PC-9 (cell line): ENCODE measurements at regions of chr13 and their contacts with region 1.

Region 1: GRCh38 chr13:30191491-30192100 is 115.8 kb downstream of the KATNAL1 start:
- DNase-seq: no peak
- H3K4me3 ChIP-seq: no peak overlapping the region
- H3K27ac ChIP-seq: no peak overlapping the region
- H3K4me1 ChIP-seq: no peaks in the 10 kb centered on the region
- H3K27me3 ChIP-seq: no peaks in the 10 kb centered on the region
- CTCF ChIP-seq: no peak

Region 2: DNA sequence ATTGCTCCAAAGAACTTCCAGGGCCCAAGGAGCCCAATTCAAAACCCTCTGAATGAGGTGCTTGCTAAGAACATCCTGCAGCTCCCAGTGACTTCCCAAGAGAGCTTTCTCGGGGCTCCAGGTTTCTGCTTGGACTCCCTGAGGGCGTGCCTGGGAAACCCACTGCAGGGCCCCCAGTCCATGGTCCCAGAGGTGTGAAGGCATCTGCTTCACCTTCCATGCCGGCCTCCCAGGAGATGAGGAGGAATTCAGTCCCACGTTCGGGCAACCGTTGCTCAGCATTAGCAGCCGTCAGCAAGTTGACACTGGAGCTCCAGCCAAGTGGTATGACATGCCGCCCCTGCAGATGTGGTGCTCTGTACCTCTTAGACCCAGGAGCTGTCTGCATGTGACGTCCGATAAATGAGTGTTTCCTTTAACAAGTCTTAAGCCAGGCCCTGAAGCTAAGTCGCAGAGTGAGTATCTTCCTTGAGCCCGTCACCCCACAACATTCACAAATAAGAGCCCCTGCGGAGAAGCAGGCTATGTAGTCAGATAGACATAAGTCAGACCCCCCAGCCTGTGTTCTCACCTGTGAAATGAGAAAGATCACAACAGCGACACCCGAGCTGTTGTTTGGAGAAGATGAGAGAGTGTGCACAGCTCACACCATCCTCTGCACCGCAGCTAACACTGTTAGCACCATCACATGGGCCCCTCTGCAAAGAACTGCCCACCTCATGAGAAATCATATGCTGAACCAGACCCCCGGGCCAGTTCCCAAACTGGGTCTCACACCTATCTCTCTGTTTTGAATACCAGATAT is 34.6 kb before region 1 on chr13:
- CTCF ChIA-PET with region 1: interaction called, 15 read pairs
- POLR2A ChIA-PET with region 1: no interaction called
- intact Hi-C with region 1: no loop called
- DNase-seq: no peak
- H3K4me3 ChIP-seq: no peak overlapping the region
- H3K27ac ChIP-seq: no peak overlapping the region
- H3K4me1 ChIP-seq: no peaks in the 10 kb centered on the region
- H3K27me3 ChIP-seq: no peaks in the 10 kb centered on the region
- CTCF ChIP-seq: no peak

Region 3: DNA sequence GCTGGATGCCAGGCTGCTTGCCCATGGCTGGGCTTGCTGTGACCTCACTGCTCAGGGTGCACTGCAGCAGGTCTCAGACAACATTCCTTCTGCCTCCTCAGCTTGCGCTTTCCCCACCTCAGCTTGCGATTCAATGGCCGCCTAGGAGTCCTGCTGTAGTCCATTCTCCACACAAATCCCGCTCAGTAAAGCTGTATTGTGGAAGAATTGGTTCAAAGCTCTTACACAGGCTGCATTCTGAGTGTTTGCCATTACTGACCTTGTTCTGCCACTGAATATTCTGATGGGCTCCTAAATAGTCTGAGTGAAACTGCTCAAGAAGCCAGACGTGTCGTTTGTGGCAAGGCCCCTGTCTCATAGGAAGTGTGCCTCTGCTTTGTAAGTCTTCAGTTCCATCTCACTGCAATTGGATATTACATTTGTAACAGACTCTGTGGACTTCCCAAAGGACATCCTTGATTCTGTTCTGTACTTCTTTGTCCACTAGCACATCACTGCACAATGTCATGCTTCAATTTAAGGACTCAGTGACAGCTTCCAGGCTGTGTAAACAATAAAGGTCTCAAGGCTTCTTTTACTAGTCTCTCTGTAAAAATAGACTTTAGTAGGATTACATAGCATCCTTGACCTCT is 66.0 kb after region 1 on chr13:
- CTCF ChIA-PET with region 1: no interaction called
- POLR2A ChIA-PET with region 1: no interaction called
- intact Hi-C with region 1: no loop called
- DNase-seq: no peak
- H3K4me3 ChIP-seq: no peak overlapping the region
- H3K27ac ChIP-seq: no peak overlapping the region
- H3K4me1 ChIP-seq: no peaks in the 10 kb centered on the region
- H3K27me3 ChIP-seq: no peaks in the 10 kb centered on the region
- CTCF ChIP-seq: no peak